ENCODE measurements at regions of chrX and their contacts with region 1.

Region 1: DNA sequence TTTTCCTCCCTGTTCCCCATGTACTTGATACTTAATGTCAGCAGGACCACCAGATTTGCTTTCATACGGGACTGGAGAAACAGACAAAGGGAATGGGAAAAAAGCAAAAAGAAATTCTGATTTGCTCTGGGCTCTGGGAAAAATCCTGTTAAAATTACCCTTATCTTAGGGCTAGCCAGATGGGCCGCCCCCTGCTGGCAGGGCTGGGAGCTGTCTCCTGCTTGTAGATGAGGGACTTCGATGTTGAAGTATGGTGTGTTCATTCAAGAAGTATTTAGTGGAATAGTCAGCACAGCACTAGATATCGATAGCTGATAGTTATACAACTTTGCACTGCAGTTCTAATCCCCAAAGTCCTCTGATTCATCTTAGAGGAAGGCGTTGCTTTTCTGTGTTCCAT is 45.8 kb downstream of the BCORL1 start:
- DNase-seq: peak; percentile 45
- H3K4me3 Mint-ChIP-seq: no peak overlapping the region
- H3K27ac Mint-ChIP-seq: no peak overlapping the region
- H3K4me1 Mint-ChIP-seq: no peaks in the 10 kb centered on the region
- H3K27me3 Mint-ChIP-seq: peaks cover 36% of the 10 kb centered on the region
- CTCF ChIP-seq: peak; percentile 40

Region 2: GRCh38 chrX:129781134-129781672 is 247.0 kb before region 1 on chrX:
- CTCF ChIA-PET with region 1: no interaction called
- POLR2A ChIA-PET with region 1: no interaction called
- intact Hi-C with region 1: no loop called
- DNase-seq: no peak
- H3K4me3 Mint-ChIP-seq: no peak overlapping the region
- H3K27ac Mint-ChIP-seq: no peak overlapping the region
- H3K4me1 Mint-ChIP-seq: no peaks in the 10 kb centered on the region
- H3K27me3 Mint-ChIP-seq: peaks cover 44% of the 10 kb centered on the region
- CTCF ChIP-seq: no peak

Region 3: GRCh38 chrX:129996120-129996519 is 32.1 kb before region 1 on chrX:
- CTCF ChIA-PET with region 1: interaction called, 12 read pairs
- POLR2A ChIA-PET with region 1: interaction called, 3 read pairs
- intact Hi-C with region 1: no loop called
- DNase-seq: peak; percentile 59
- H3K4me3 Mint-ChIP-seq: no peak overlapping the region
- H3K27ac Mint-ChIP-seq: peak overlapping the region; percentile 46
- H3K4me1 Mint-ChIP-seq: no peaks in the 10 kb centered on the region
- H3K27me3 Mint-ChIP-seq: peaks cover 9% of the 10 kb centered on the region
- CTCF ChIP-seq: no peak

Region 4: DNA sequence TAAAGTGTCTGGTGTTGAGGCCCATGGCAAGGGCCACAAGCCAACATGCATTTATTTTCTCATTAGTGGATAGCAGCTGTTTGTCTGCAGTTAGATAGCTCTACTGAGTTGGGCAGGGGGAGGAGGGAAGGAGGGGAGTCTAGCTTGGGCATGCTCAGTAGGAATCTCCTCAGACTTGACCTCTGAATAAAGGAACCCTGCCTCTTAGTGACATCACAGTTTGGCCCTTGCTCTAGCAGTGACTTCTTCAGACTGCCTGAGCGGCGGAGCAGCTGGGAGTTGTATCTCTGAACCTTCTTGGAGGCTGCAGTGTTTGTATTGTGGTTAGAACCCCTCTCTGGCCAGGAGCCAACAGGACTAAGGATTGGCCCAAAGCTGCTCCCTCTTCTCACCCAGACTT is 11.7 kb after region 1 on chrX:
- CTCF ChIA-PET with region 1: interaction called, 18 read pairs
- POLR2A ChIA-PET with region 1: no interaction called
- intact Hi-C with region 1: no loop called
- DNase-seq: no peak
- H3K4me3 Mint-ChIP-seq: no peak overlapping the region
- H3K27ac Mint-ChIP-seq: no peak overlapping the region
- H3K4me1 Mint-ChIP-seq: no peaks in the 10 kb centered on the region
- H3K27me3 Mint-ChIP-seq: no peaks in the 10 kb centered on the region
- CTCF ChIP-seq: no peak